Activated naive CD4-positive, alpha-beta T cell treated with anti-CD3 and anti-CD28 coated beads, Interleukin-2, amount 10 ng/mL, durations not matched to agents 7 days and 5 days (primary cell): ENCODE measurements at regions of chr19 and their contacts with region 1.

Region 1: GRCh38 chr19:44576843-44577565 is 36.4 kb upstream of the IGSF23 start:
- DNase-seq: peak; percentile 49
- H3K4me3 Mint-ChIP-seq: no peak overlapping the region
- H3K27ac Mint-ChIP-seq: no peak overlapping the region
- H3K4me1 Mint-ChIP-seq: no peaks in the 10 kb centered on the region
- H3K27me3 Mint-ChIP-seq: no peaks in the 10 kb centered on the region

Region 2: DNA sequence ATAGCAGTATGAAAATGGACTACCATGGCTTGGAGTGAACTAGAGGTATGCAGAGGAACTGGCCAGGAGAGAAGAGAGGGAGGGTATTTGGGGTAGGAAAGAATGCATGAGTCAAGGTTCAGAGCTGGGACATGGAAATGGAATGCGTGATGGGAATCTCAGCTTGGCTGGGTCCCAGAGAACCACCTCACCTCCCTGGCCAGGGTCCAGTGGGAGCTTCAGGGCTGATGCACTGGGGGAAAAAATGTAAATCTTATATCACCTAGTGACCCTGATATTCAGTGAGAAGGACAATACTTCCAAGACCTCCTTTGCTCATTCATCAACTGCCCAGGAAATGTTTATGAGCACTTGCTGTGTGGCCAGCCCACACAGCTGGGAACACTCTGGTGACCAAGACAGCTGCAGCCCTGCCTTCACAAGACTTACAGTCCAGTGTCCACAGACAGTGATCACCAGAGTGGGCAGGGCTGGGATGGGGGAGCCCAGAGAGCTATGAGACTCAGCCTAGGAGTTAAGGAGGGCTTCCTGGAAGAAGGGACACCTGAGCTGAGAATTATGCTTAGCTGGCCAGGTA is 49.1 kb after region 1 on chr19:
- CTCF ChIA-PET with region 1: no interaction called
- DNase-seq: no peak
- H3K4me3 Mint-ChIP-seq: no peak overlapping the region
- H3K27ac Mint-ChIP-seq: no peak overlapping the region
- H3K4me1 Mint-ChIP-seq: no peaks in the 10 kb centered on the region
- H3K27me3 Mint-ChIP-seq: peaks cover 4% of the 10 kb centered on the region

Region 3: DNA sequence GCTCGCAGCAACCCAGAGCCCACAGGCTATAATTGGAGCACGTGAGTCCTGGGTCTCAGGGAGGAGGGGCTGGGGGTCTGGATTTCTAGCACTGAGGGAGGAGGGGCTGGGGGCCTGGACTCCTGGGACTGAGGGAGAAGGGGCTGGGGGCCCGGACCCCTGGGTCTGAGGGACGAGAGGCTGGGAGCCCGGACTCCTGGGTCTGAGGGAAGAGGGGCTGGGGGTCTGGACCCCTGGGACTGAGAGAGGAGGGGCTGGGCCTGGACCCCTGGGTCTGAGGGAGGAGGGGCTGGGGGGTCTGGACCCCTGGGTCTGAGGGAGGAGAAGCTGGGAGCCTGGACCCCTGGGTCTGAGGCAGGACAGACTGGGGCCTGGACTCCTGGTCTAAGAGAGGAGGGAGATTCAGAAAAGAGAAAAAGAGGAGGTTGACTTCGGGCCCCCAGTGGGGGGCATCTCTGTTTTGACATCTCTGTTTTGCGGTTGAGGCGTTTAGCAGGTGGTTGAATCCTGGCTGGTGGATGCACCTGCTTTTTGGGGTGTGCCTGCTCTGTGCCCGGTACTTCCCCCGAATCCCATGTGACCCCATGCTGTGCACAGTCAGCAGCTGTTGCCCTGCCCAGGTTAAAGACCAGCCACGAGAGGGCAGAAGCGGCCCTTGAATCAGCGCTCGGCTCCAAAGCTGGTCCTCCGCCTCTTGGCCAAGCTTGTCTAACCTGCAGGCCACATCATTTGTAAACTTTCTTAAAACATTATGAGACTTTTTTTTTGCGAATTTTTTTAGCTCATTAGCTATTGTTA is 77.2 kb after region 1 on chr19:
- CTCF ChIA-PET with region 1: interaction called, 30 read pairs
- DNase-seq: peak; percentile 85
- H3K4me3 Mint-ChIP-seq: no peak overlapping the region
- H3K27ac Mint-ChIP-seq: no peak overlapping the region
- H3K4me1 Mint-ChIP-seq: peaks cover 6% of the 10 kb centered on the region
- H3K27me3 Mint-ChIP-seq: no peaks in the 10 kb centered on the region